ENCODE measurements at regions of chr18 and their contacts with region 1.

Region 1: GRCh38 chr18:21406111-21406510 is 164.1 kb downstream of the GREB1L start:
- DNase-seq: no peak
- H3K4me3 ChIP-seq: no peak overlapping the region
- H3K27ac ChIP-seq: no peak overlapping the region
- H3K4me1 ChIP-seq: no peaks in the 10 kb centered on the region
- H3K27me3 ChIP-seq: peaks cover 9% of the 10 kb centered on the region
- CTCF ChIP-seq: no peak

Region 2: DNA sequence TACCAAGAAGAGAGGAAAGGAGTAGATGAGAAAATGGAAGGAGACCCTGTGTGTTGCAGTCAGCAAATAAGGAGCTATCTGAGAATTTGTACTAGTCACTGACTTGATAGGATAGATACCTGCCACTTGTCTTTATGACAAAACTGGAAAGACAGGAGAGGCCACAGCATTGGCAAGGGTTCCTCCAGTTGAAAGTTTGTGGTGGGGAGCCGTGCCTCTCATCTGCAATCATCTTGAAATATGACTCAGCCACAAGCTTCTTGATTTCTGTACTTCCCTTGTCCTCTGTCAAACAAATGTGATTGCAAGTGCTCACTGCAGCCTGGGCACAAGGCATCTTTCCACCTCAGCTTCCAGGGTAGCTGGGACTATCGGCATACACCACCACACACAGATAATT is 65.0 kb before region 1 on chr18:
- CTCF ChIA-PET with region 1: no interaction called
- POLR2A ChIA-PET with region 1: no interaction called
- intact Hi-C with region 1: loop called (anchors 10 kb)
- DNase-seq: no peak
- H3K4me3 ChIP-seq: no peak overlapping the region
- H3K27ac ChIP-seq: no peak overlapping the region
- H3K4me1 ChIP-seq: no peaks in the 10 kb centered on the region
- H3K27me3 ChIP-seq: no peaks in the 10 kb centered on the region
- CTCF ChIP-seq: no peak